Activated T-helper 2 cell treated with anti-CD3 and anti-CD28 coated beads, Interferon-gamma antibody, Interleukin-2, Interleukin-4, amounts not matched to agents 10 μg/mL and 5 μg/mL and 100 μg/mL, durations not matched to agents 14 hours and 24 hours and 36 hours (primary cell): ENCODE measurements at regions of chr1 and their contacts with region 1.

Region 1: GRCh38 chr1:67685067-67685557 is at the start of gene GADD45A:
- DNase-seq: peak; percentile 96
- H3K4me3 Mint-ChIP-seq: peak within 1 kb of the TSS; percentile 98
- H3K27ac Mint-ChIP-seq: peak within 1 kb of the TSS; percentile 99
- H3K4me1 Mint-ChIP-seq: peaks cover 39% of the 10 kb centered on the region
- H3K27me3 Mint-ChIP-seq: no peaks in the 10 kb centered on the region
- total RNA-seq, gene GADD45A: 30.3 and 33.5 TPM in 2 replicates

Region 2: DNA sequence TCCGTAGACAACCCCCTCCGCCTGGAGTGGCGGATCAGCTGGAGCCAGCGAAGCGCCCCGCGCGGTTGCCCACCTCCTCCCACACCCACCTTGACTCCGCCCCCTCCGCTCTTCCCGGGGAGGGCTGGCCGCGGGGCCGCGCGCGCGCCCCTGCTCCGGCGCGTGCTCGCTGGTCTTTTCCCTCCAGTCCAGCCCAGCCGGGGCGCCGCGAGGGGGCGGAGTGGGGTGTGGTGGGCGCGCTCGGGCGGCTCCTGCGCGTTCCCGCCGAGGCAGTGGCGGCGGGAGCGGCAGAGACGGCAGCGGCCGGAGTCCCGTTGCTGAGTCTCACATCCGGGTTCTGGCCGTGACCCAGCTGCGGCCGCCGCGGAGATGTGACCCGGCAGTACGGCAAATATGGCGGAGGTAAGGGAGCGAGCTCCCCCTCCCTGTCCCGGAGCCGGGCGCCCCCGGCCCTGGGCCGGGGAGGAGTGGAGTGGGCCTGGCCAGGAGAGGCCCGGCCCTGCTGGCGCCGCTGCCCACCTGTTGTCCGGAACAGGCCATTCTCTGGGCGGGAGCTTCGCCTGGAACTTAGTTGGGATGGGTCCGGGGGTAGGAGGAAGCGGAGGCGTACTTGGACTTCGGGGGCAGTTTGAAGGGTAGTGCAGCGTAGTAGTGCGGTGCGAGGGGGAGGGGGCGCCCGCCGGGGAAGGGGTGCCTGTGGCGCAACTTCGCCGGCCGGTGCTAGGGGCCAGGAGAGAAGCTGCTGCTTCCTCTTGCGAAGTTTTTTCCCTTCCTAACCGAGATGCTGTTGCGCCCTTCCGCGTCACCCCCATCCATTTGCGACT is 754.9 kb before region 1 on chr1:
- intact Hi-C with region 1: loop called (anchors 1 kb)
- DNase-seq: peak; percentile 93
- H3K4me3 Mint-ChIP-seq: peak overlapping the region; percentile 90
- H3K27ac Mint-ChIP-seq: peak overlapping the region; percentile 91
- H3K4me1 Mint-ChIP-seq: peaks cover 55% of the 10 kb centered on the region
- H3K27me3 Mint-ChIP-seq: no peaks in the 10 kb centered on the region

Region 3: GRCh38 chr1:67214420-67215174 is 470.5 kb before region 1 on chr1:
- intact Hi-C with region 1: loop called (anchors 5 kb)
- DNase-seq: no peak
- H3K4me3 Mint-ChIP-seq: no peak overlapping the region
- H3K27ac Mint-ChIP-seq: no peak overlapping the region
- H3K4me1 Mint-ChIP-seq: peaks cover 32% of the 10 kb centered on the region
- H3K27me3 Mint-ChIP-seq: no peaks in the 10 kb centered on the region

Region 4: DNA sequence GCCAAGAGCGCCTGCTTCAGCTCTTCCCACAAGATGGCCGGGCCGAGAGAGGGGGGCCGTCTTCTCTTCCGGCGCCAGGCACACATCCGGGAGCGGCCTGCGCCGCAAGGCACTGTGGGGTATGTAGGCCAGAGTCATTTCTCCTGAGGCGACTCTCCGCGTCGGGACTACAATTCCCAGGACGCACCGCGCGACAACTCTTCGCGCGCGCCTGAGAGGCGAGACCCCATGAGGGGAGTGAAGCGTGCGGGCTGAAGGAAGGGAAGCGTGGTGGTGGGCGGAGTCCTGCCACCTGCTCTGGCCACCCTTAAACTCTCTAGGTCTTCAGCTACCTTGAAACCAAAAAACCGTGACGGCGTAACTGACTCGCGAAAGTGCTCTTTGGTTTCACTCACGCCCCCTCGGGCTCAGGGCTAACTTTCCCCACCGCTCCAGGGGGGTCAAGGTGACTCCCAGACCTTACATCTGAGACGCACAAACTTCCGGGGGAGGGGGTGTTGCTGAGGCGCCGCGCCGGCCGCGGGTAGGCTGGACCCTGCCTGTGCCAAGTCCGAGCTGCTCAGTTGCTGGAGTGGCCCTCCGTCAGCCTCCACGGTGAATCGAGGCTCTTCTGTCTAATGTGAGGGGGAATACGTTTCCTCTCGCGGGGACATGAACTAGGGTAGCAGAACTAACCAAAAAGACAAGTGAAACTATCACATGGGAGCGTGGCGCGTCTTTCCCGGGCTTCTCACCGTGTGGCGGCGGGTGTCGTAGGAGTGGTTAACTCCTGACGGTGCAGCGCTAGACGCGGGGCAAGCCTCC is 254.6 kb before region 1 on chr1 and contains the start of gene SERBP1:
- intact Hi-C with region 1: loop called (anchors 2 kb)
- DNase-seq: peak; percentile 95
- H3K4me3 Mint-ChIP-seq: peak within 1 kb of the TSS; percentile 87
- H3K27ac Mint-ChIP-seq: peak within 1 kb of the TSS; percentile 95
- H3K4me1 Mint-ChIP-seq: peaks cover 48% of the 10 kb centered on the region
- H3K27me3 Mint-ChIP-seq: no peaks in the 10 kb centered on the region
- total RNA-seq, gene SERBP1: 484 and 491 TPM in 2 replicates

Region 5: DNA sequence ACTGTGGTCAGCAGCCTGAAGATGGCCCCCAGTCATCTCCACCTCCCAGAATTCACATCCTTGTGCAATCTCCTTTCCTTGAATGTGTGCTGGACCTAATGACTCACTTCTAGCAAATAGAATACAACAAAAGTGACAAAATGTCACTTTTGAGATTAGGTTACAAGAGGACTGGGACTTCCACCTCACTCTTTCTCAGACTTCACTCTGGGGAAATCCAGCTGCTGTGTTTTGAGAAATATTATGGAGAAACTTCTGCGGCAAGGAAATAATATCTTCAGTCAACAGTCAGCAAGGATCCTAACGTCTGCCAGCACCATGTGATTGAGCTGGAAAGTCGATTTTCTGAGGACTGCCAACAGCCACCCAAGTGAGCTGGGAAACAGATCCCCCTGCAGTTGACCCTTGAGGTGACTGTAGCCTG is 70.6 kb before region 1 on chr1:
- intact Hi-C with region 1: no loop called
- DNase-seq: no peak
- H3K4me3 Mint-ChIP-seq: no peak overlapping the region
- H3K27ac Mint-ChIP-seq: no peak overlapping the region
- H3K4me1 Mint-ChIP-seq: no peaks in the 10 kb centered on the region
- H3K27me3 Mint-ChIP-seq: peaks cover 12% of the 10 kb centered on the region

Region 6: GRCh38 chr1:67674260-67675011 is 10.7 kb before region 1 on chr1:
- intact Hi-C with region 1: loop called (anchors 1 kb)
- DNase-seq: peak; percentile 36
- H3K4me3 Mint-ChIP-seq: no peak overlapping the region
- H3K27ac Mint-ChIP-seq: peak overlapping the region; percentile 74
- H3K4me1 Mint-ChIP-seq: peaks cover 24% of the 10 kb centered on the region
- H3K27me3 Mint-ChIP-seq: peaks cover 31% of the 10 kb centered on the region

Region 7: GRCh38 chr1:67748630-67749029 is 63.5 kb after region 1 on chr1:
- intact Hi-C with region 1: no loop called
- DNase-seq: no peak
- H3K4me3 Mint-ChIP-seq: no peak overlapping the region
- H3K27ac Mint-ChIP-seq: no peak overlapping the region
- H3K4me1 Mint-ChIP-seq: peaks cover 24% of the 10 kb centered on the region
- H3K27me3 Mint-ChIP-seq: peaks cover 13% of the 10 kb centered on the region

Region 8: GRCh38 chr1:67760030-67760821 is 75.1 kb after region 1 on chr1:
- intact Hi-C with region 1: loop called (anchors 2 kb)
- DNase-seq: peak; percentile 20
- H3K4me3 Mint-ChIP-seq: no peak overlapping the region
- H3K27ac Mint-ChIP-seq: no peak overlapping the region
- H3K4me1 Mint-ChIP-seq: no peaks in the 10 kb centered on the region
- H3K27me3 Mint-ChIP-seq: peaks cover 26% of the 10 kb centered on the region